Dorsolateral prefrontal cortex (tissue), 120 donors: ENCODE measurements at regions of chr15 and their contacts with region 1.

Region 1: GRCh38 chr15:35444557-35445204 is 101.3 kb downstream of the DPH6 start:
- DNase-seq: no peak
- H3K4me3 ChIP-seq: no peak overlapping the region
- H3K27ac ChIP-seq: no peak overlapping the region
- H3K27me3 ChIP-seq: no peaks in the 10 kb centered on the region
- CTCF ChIP-seq: peak; percentile 47 to 85 (median 72)

Region 2: GRCh38 chr15:35067496-35068347 is 377.0 kb before region 1 on chr15:
- intact Hi-C with region 1: loop called in 1 of 2 experiments (anchors 5 kb)
- DNase-seq: no peak
- H3K4me3 ChIP-seq: no peak overlapping the region
- H3K27ac ChIP-seq: peak overlapping the region in 1 of 59 donors; percentile 76
- H3K27me3 ChIP-seq: no peaks in the 10 kb centered on the region
- CTCF ChIP-seq: no peak

Region 3: DNA sequence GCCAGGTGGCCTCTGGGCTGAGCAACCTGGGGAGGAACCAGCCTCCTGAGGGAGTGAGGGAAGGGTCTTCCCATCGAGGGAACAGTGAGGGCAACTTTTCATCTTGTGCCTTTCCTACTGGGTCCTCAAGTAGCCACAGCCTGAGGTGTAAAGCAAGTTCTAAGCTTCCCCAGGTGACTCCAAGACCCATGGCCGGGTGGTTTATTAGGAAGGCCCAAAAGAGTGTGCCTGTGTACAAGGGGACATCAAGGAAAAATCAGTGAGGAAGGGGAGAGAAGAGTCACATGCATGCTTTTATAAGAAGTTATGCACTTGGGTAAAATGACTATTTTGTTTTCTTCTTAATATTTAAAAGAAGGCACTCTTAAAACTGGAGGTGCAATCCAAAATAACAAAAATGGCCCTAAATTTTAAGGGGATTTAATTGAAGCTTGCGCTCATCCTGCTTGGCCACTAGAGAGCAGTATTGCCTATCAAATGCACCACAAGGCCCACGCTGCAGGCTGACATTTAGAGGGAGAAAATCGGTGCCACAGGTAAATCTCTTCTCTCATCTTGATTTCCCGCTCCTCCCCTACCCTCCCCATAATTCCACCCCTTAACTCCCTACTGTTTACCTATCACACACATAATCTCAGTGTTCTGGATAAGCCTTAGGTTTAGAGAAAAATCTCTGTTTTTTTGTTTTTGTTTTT is 366.3 kb before region 1 on chr15:
- intact Hi-C with region 1: loop called (anchors 2 to 5 kb)
- DNase-seq: peak in 4 of 10 donors; percentile 16 to 46 (median 36)
- H3K4me3 ChIP-seq: peak overlapping the region in 6 of 59 donors; percentile 12 to 24 (median 24)
- H3K27ac ChIP-seq: no peak overlapping the region
- H3K27me3 ChIP-seq: no peaks in the 10 kb centered on the region
- CTCF ChIP-seq: peak; percentile 65 to 89 (median 80)

Region 4: DNA sequence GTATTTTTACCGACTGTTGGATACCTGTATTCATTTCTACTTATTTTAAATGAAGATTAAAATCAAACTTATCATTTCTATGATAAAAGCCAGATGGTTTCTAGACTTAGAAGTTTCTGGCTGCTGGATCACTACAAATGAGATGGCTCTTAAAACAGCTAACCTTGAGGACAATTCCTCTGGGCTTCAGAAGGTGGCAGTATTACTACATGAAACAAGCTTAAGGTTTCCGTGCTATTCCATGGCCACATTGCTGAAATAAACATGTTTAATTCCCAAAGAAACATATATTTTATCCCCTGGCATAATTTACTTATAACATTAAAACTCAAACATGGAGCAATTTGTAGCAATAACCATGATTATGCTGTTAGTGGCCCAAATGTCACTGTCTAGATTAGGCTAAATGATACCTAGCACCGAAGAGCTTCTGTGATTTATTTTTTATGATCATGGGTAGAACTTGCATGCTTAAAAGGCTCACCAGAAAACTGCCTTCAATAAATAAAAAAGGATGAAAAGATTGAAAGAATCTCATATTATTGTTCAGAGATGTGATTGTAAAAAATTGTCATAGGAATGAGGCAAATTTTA is 155.6 kb before region 1 on chr15:
- intact Hi-C with region 1: loop called in 1 of 2 experiments (anchors 2 kb)
- DNase-seq: peak in 1 of 10 donors; percentile 5
- H3K4me3 ChIP-seq: no peak overlapping the region
- H3K27ac ChIP-seq: no peak overlapping the region
- H3K27me3 ChIP-seq: no peaks in the 10 kb centered on the region
- CTCF ChIP-seq: peak; percentile 47 to 88 (median 72)

Region 5: DNA sequence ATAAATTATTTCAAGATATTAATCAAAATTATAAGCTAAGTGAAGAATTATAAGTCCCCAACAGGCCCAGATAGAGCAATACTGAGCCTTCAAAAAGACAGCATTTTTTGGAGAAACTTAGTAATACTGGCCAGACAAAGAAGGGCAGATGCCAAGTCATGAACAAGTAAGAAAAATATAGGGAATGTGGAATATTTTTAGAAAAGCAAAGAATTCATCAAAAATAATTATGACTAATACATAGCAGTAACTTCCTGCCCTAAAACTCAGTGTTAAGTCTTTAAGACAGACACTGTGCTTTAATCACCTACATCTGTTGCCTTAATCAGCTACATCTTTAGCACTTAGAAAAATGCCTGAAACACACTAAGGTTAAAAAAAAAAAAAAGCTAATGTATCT is 70.1 kb after region 1 on chr15:
- intact Hi-C with region 1: no loop called
- DNase-seq: no peak
- H3K4me3 ChIP-seq: no peak overlapping the region
- H3K27ac ChIP-seq: no peak overlapping the region
- H3K27me3 ChIP-seq: no peaks in the 10 kb centered on the region
- CTCF ChIP-seq: no peak